Activated B cell treated with CpG ODN at 0.5 μM for 24 hours (primary cell): ENCODE measurements at regions of chr10 and their contacts with region 1.

Region 1: DNA sequence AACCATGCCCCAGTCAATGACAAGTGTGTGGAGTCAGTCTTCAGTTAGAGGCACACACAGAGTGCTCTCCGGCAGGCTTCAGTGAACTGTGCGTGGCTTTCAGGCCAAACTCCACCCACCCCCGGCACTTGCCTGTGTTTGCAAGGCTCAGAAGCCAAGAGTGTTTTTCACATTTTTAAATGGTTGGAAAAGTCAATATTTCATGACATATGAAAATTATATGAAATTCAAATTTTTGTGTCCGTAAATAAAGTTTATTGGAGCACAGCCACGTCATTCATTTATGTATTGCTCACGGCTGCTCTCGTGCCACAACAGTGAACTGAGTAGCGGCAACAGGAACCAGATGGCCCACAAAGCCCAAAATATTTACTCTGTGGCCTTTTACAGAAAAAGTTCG is 104.7 kb downstream of the SFMBT2 start:
- DNase-seq: no peak
- ATAC-seq: peak; percentile 83
- H3K4me3 Mint-ChIP-seq: peak overlapping the region; percentile 72
- H3K27ac Mint-ChIP-seq: peak overlapping the region; percentile 84
- H3K4me1 Mint-ChIP-seq: peaks cover 56% of the 10 kb centered on the region
- H3K27me3 Mint-ChIP-seq: no peaks in the 10 kb centered on the region
- CTCF ChIP-seq: no peak

Region 2: GRCh38 chr10:7243873-7244272 is 62.3 kb before region 1 on chr10:
- CTCF ChIA-PET with region 1: no interaction called
- POLR2A ChIA-PET with region 1: no interaction called
- intact Hi-C with region 1: no loop called
- DNase-seq: no peak
- ATAC-seq: peak; percentile 66
- H3K4me3 Mint-ChIP-seq: peak overlapping the region; percentile 37
- H3K27ac Mint-ChIP-seq: peak overlapping the region; percentile 62
- H3K4me1 Mint-ChIP-seq: peaks cover 21% of the 10 kb centered on the region
- H3K27me3 Mint-ChIP-seq: no peaks in the 10 kb centered on the region
- CTCF ChIP-seq: no peak

Region 3: DNA sequence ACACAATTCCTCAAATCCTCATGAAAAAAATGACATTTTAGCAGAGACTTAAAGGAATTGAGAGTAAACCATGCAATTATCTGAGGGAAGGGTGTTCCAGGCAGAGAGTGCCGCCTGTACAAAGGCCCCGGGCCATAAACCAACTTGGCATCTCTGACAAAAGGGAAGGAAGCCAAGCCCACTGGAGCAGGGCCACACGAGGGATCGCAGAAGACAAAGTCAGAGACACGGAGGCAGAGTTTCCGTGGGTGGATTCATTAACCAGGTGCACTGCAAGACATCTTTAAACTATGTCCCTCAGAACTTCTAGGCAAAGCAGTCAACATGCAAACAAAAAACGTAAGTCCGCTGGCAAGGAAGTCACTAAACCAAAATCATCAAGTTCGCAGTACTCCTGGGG is 12.7 kb after region 1 on chr10:
- CTCF ChIA-PET with region 1: no interaction called
- POLR2A ChIA-PET with region 1: no interaction called
- intact Hi-C with region 1: loop called (anchors 1 kb)
- DNase-seq: no peak
- ATAC-seq: peak; percentile 57
- H3K4me3 Mint-ChIP-seq: peak overlapping the region; percentile 36
- H3K27ac Mint-ChIP-seq: peak overlapping the region; percentile 16
- H3K4me1 Mint-ChIP-seq: peaks cover 53% of the 10 kb centered on the region
- H3K27me3 Mint-ChIP-seq: no peaks in the 10 kb centered on the region
- CTCF ChIP-seq: no peak

Region 4: DNA sequence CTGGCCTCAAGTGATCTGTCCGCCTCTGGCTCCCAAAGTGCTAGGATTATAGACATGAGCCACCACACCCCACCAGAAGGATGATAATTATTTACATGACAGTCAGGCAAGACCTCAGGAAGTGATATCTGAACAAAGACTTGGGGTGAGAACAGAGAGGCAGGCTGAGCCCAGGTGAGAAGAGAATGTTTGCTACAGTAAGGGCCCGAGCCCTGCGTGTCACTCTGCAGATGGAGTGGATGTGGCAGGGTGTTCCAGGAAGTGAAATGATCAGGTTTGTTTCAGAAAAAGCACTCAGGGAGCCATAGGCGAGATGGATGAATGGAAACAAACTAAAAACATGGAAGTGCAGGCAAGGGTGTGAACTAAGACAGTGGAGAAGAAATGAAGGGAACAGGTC is 82.5 kb after region 1 on chr10:
- CTCF ChIA-PET with region 1: no interaction called
- POLR2A ChIA-PET with region 1: no interaction called
- intact Hi-C with region 1: loop called (anchors 5 kb)
- DNase-seq: no peak
- ATAC-seq: no peak
- H3K4me3 Mint-ChIP-seq: peak overlapping the region; percentile 7
- H3K27ac Mint-ChIP-seq: peak overlapping the region; percentile 43
- H3K4me1 Mint-ChIP-seq: peaks cover 33% of the 10 kb centered on the region
- H3K27me3 Mint-ChIP-seq: no peaks in the 10 kb centered on the region
- CTCF ChIP-seq: no peak